ENCODE measurements at regions of chr20 and their contacts with region 1.

Region 1: GRCh38 chr20:36439040-36439730 is 102.1 kb upstream of the MYL9 start:
- DNase-seq: peak; percentile 82
- CTCF ChIP-seq: peak; percentile 99

Region 2: GRCh38 chr20:35604449-35604747 is 834.8 kb before region 1 on chr20:
- CTCF ChIA-PET with region 1: no interaction called
- POLR2A ChIA-PET with region 1: no interaction called
- DNase-seq: no peak
- CTCF ChIP-seq: peak; percentile 36

Region 3: DNA sequence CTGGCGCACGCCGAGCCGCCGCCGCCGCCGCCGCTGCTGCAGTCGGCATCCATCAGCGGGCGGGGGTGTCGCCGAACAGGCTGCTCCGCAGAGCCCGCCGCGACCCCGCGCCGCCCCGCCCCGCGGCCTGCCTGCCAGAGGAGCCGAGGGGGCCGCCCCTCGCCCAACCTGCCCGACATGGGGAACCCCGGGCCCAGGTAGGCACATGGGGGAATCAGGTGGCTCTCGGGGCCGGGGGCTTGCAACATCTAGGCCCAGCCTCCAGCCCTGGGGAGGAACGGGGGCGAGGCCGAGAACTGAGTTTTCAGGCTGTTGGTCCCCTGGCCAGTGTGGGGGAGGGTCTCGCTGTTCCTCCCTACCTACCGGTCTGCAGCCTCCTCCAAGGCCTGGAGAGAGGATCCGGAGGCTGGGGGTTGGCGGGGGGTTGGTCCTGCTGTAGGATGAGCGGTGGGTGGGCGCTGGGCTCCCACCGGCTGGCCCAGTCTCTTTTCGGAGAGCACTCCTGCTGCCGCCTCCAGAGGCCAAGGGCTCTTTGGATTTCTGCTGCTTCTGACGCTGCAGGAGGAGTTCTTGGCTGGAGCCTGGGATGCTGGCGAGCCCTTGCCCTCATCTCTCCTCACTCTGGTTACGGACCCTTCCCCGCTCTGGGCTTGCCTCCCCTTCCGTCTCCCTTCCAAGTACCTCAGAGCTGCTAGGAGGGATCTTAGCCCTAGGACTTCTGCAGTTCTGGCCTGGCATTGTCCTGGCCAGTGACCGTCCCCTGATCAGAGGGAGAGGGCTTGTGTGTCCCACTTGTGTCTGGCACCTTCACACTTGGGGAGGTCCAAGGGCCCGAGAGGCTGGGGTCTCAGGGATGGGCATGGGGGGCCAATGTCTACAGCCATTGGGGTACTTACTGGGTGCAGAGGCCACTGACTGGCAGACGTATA is 284.2 kb before region 1 on chr20 and contains the start of gene EPB41L1:
- CTCF ChIA-PET with region 1: interaction called, 13 read pairs
- POLR2A ChIA-PET with region 1: no interaction called
- DNase-seq: no peak
- CTCF ChIP-seq: no peak

Region 4: DNA sequence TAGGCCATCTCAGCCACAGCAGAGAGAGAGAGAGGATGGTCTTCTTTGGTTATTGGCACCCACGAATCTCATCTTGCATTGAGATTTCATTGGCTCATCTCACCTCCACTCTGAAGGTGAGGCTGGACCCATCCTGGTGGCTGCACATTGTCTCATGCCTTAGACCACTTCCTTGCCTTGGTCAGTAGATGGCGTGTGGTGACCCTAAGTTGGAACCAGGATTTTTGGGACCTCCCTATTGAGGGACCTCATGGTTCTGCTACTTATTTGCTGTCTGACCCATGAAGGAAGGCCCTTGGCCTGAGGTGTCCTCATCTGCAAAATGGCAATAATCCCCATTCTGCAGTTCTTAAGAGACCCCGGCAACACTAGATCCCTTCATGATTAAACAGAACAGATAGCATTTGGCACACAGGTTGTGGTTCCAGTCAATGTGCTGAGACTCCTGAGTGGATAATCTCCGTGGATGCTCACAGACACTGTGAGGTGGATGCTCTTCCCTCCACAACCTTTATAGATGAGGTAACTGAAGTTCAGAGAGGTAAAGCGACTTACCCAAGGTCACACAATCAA is 224.4 kb before region 1 on chr20:
- CTCF ChIA-PET with region 1: interaction called, 56 read pairs
- POLR2A ChIA-PET with region 1: no interaction called
- DNase-seq: peak; percentile 60
- CTCF ChIP-seq: peak; percentile 68

Region 5: DNA sequence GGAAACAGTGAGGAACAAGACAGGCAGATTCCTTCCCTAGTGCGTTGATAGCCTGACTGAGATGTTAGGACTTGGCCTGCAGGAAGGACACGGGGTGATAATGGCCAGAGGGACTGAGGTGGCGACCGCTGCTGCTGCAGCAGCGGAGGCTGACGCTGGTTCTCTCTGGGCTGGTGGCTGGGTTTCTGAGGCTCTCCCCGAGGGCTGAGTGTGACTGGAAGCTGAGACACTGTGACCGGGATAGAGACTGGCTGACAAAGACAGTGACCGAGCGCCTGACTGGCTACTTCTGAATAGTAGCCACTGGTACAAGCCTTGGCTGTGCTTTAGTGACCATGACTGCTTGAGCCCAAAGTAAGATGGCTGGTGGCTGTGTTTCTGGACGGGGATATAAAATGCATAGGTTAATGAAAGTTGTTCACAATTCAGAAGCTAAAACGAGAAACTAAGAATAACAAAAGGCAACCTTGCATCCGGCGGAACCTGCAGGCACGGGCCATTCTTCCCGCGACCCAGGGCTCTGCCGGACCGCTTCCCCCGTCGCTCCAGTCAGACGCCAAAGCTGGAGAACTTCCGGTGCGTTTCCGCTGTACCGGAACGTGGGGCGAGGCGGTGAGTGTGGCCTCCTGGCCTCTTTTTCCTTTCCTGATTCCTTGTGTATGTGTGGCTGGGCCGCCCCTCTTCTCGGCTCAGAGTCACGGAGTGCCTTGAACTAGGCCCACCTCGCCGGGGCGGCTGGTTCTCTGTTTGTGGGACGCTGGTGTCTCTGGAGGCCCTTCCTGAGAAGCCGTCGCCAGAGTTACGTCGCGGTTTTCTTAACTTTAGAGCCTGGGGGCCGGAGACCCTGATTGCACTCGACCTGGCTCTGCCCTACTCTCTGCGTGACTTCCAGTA is 203.0 kb before region 1 on chr20 and contains the start of gene AAR2:
- CTCF ChIA-PET with region 1: interaction called, 11 read pairs
- POLR2A ChIA-PET with region 1: no interaction called
- DNase-seq: peak; percentile 81
- CTCF ChIP-seq: no peak

Region 6: GRCh38 chr20:36273414-36274180 is 165.6 kb before region 1 on chr20:
- CTCF ChIA-PET with region 1: interaction called, 66 read pairs
- POLR2A ChIA-PET with region 1: no interaction called
- DNase-seq: peak; percentile 51
- CTCF ChIP-seq: peak; percentile 53

Region 7: DNA sequence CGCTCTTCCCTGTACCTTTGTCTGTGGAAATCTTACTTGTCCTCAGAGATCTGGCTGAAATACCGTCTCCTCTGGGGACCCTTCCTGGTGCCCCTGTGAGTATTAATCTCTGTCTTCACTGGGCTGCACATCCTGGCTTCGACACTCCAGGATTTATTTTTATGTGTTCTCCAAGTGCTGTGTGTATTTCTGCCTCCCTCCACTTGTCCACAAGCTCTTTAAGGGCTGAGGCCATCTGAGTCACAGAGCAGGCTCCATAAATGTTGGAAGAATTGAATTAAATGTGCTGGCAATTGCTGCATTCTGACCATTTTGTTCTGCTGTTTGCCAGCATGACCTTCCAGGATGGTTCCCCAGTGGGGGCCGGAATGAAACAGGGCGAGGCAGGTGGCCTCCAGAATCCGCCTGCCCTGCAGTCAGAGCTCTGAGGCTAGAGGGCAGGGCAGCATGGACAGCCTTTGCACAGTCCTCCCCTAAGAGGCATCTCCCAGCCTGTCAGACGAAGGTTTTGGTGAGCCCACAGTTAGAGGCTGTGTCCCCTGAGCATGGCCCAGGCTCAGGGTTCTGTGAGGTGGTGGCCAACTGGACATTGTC is 27.2 kb before region 1 on chr20:
- CTCF ChIA-PET with region 1: no interaction called
- POLR2A ChIA-PET with region 1: no interaction called
- DNase-seq: no peak
- CTCF ChIP-seq: no peak

Region 8: DNA sequence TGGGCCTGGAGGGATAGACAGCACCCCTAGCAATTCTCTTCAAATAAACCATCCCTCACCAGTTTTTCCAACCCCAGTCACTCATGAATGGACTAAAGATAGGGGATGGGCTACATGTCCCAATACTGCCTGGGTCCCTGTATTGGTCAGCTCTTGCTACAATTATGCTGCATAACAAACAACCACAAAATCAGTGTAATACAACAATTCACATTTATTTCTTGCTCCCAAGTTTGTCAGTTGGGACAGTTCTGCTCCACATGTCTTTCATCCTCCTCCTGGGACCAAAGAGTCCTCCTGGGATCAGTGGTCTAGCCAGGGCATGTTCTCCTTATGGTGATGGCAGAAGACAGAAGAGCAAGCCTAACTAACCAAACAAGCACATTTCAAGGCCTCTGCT is 10.5 kb after region 1 on chr20:
- CTCF ChIA-PET with region 1: interaction called, 35 read pairs
- POLR2A ChIA-PET with region 1: no interaction called
- DNase-seq: no peak
- CTCF ChIP-seq: no peak

Region 9: GRCh38 chr20:36465109-36466080 is 26.2 kb after region 1 on chr20:
- CTCF ChIA-PET with region 1: interaction called, 14 read pairs
- POLR2A ChIA-PET with region 1: no interaction called
- DNase-seq: no peak
- CTCF ChIP-seq: no peak

Region 10: GRCh38 chr20:36645998-36646397 is 206.8 kb after region 1 on chr20 and contains the start of gene SLA2:
- CTCF ChIA-PET with region 1: no interaction called
- POLR2A ChIA-PET with region 1: no interaction called
- DNase-seq: peak; percentile 64
- CTCF ChIP-seq: no peak

Measured in GM10248 (cell line).